ENCODE measurements at regions of chr19 and their contacts with region 1.

Region 1: DNA sequence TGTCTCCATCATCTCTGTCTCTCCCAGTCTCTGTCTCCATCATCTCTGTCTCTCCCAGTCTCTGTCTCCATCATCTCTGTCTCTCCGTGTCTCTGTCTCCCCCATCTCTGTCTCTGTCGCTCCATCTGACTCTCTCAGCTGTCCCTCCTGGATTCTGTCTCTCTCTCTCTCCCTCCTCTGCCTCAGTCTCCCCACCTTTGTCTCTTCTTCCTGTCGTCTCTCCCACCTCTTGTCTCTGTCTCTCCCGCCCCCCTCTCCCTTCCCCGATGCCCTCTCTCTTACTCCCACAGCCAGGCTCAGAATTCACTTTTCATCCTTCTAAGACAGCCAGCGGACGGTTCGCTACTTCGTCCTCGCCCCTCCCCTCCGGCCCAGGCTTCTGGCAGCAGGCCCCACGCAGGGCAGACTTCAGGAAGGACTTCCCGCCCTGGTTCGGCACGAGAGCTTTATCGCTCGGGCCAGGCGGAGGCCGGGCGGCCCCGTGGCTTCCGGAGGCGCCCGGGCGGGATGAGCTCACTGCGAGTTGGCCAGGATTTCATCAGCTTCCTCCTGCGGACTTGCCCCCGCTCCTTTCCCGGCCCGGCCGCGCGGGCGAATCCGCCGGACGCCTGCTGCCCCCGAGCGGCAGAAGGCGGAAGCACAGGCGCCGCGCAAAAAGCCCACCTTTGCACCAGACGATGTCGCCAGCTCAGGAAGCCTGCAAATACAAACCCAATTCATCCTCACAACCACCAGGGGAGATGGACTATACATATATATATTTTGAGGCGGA is 12.4 kb upstream of the CCDC9 start:
- DNase-seq: peak; percentile 89 to 94 (median 93)
- H3K4me3 ChIP-seq: peak overlapping the region; percentile 20
- H3K27ac ChIP-seq: no peak overlapping the region
- H3K4me1 ChIP-seq: peaks cover 6% of the 10 kb centered on the region
- H3K27me3 ChIP-seq: no peaks in the 10 kb centered on the region
- CTCF ChIP-seq: peak; percentile 95 to 99 (median 99)
- EP300 ChIP-seq: no peak
- POLR2A ChIP-seq: no peak

Region 2: GRCh38 chr19:46898731-46899130 is 345.2 kb before region 1 on chr19:
- intact Hi-C with region 1: no loop called
- DNase-seq: peak in 3 of 5 donors; percentile 17 to 25 (median 25)
- H3K4me3 ChIP-seq: no peak overlapping the region
- H3K27ac ChIP-seq: no peak overlapping the region
- H3K4me1 ChIP-seq: peaks cover 15% of the 10 kb centered on the region
- H3K27me3 ChIP-seq: no peaks in the 10 kb centered on the region
- CTCF ChIP-seq: no peak
- EP300 ChIP-seq: no peak
- POLR2A ChIP-seq: no peak

Region 3: DNA sequence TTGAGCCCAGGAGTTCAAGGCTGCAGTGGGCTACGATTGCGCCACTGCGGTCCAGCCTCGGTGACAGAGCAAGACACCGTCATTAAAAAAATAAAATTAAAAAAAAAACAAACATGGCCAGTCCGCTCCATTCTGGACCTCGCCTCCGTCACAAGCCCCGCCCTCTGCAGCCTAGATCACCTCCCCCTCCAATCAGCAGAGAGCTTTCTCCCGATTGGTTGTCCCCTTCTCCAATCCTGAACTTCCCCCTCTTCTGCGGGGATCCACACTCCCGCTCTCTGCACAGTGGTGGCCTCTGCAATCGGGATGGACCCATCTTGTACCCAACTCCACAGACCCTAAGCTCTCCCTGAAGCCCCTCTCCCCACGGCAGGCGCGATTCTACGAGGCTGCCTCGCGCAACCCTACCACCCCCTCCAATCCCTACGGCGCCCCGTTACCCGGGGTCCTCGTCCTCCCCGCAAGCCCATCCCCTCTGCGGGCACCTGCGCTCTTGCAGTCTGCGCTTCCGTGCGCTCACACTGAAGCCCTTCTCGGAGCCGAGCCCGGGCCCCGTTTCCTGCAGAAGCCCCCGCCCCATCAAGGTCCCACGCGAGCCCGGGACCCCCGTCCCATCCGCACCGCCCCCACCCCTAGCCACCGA is 196.1 kb before region 1 on chr19:
- intact Hi-C with region 1: no loop called
- DNase-seq: peak; percentile 78 to 87 (median 84)
- H3K4me3 ChIP-seq: peak overlapping the region; percentile 79
- H3K27ac ChIP-seq: peak overlapping the region in 1 of 2 donors; percentile 45
- H3K4me1 ChIP-seq: peaks cover 4% of the 10 kb centered on the region
- H3K27me3 ChIP-seq: no peaks in the 10 kb centered on the region
- CTCF ChIP-seq: no peak
- EP300 ChIP-seq: no peak
- POLR2A ChIP-seq: no peak

Region 4: GRCh38 chr19:47075179-47075810 is 168.7 kb before region 1 on chr19:
- intact Hi-C with region 1: loop called in 1 of 4 experiments (anchors 5 kb)
- DNase-seq: no peak
- H3K4me3 ChIP-seq: no peak overlapping the region
- H3K27ac ChIP-seq: no peak overlapping the region
- H3K4me1 ChIP-seq: no peaks in the 10 kb centered on the region
- H3K27me3 ChIP-seq: no peaks in the 10 kb centered on the region
- CTCF ChIP-seq: no peak
- EP300 ChIP-seq: no peak
- POLR2A ChIP-seq: no peak

Region 5: DNA sequence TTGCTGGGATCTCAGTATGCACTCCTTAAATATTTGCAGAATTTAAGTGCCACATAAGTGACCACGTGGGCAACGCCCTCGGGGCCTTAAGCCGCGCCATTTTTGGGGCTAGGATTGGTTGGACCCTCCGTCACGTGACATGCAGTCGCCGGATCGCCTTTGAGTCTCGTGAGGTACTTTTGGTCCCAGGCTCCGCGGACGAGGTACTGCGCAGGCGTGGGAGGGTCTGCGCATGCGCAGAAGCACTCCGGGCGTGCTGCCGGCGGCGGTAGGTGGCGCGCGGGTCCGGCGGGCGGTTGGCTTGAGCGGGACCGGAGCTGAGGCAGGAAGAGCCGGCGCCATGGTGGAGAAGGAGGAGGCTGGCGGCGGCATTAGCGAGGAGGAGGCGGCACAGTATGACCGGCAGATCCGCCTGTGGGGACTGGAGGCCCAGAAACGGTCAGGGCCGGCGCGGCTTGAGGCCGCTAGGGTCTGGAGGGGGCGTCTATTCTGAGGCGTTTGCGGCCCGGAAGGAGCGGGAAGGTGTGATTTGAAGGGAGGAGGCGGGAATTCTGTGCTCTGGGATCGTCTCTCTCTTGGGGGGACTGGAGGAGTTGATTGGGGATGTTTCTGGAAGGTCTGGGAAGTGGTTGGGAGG is 113.3 kb before region 1 on chr19 and contains the start of gene SAE1:
- intact Hi-C with region 1: no loop called
- DNase-seq: peak; percentile 93 to 97 (median 93)
- H3K4me3 ChIP-seq: peak within 1 kb of the TSS; percentile 83
- H3K27ac ChIP-seq: peak within 1 kb of the TSS; percentile 73 to 88
- H3K4me1 ChIP-seq: peaks cover 9% of the 10 kb centered on the region
- H3K27me3 ChIP-seq: no peaks in the 10 kb centered on the region
- CTCF ChIP-seq: peak; percentile 24 to 71 (median 71)
- EP300 ChIP-seq: no peak
- POLR2A ChIP-seq: peak; percentile 47
- total RNA-seq, gene SAE1: 25.5 to 64.8 (median 55.6) TPM

Region 6: DNA sequence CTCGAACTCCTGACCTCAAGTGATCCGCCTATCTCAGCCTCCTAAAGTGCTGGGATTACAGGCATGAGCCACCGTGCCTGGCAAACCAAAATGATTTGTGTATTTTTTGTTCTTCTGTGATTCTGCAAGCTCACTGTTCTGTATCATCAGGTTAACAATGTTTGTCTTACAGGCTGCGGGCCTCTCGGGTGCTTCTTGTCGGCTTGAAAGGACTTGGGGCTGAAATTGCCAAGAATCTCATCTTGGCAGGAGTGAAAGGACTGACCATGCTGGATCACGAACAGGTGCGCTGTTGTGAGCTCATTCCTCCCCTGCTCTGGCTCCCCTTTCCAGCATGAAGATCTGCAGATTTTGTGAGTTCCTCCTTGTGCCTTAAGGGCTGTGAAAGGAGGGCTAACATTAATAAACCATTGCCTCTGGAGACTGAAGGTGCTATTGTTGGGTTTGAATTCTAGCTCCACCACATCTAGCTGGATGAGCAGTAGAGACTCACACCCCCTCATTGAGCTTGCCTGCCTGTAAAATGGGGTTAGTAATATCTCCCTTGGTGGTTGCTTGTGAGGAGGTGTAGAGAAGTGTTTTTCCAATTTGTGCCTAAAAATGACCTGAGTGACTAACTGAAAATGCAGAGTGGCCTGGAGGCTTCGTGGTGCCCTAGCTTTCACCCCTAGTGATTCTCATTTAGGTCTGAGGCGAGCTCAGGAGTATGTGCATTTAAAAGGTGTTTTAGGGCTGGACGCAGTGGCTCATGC is 100.5 kb before region 1 on chr19:
- intact Hi-C with region 1: loop called in 3 of 4 experiments (anchors 2 to 10 kb)
- DNase-seq: no peak
- H3K4me3 ChIP-seq: no peak overlapping the region
- H3K27ac ChIP-seq: no peak overlapping the region
- H3K4me1 ChIP-seq: no peaks in the 10 kb centered on the region
- H3K27me3 ChIP-seq: no peaks in the 10 kb centered on the region
- CTCF ChIP-seq: no peak
- EP300 ChIP-seq: no peak
- POLR2A ChIP-seq: no peak

Region 7: GRCh38 chr19:47152224-47153017 is 91.5 kb before region 1 on chr19:
- intact Hi-C with region 1: loop called (anchors 2 to 10 kb)
- DNase-seq: no peak
- H3K4me3 ChIP-seq: no peak overlapping the region
- H3K27ac ChIP-seq: no peak overlapping the region
- H3K4me1 ChIP-seq: peaks cover 2% of the 10 kb centered on the region
- H3K27me3 ChIP-seq: no peaks in the 10 kb centered on the region
- CTCF ChIP-seq: no peak
- EP300 ChIP-seq: no peak
- POLR2A ChIP-seq: no peak

Region 8: DNA sequence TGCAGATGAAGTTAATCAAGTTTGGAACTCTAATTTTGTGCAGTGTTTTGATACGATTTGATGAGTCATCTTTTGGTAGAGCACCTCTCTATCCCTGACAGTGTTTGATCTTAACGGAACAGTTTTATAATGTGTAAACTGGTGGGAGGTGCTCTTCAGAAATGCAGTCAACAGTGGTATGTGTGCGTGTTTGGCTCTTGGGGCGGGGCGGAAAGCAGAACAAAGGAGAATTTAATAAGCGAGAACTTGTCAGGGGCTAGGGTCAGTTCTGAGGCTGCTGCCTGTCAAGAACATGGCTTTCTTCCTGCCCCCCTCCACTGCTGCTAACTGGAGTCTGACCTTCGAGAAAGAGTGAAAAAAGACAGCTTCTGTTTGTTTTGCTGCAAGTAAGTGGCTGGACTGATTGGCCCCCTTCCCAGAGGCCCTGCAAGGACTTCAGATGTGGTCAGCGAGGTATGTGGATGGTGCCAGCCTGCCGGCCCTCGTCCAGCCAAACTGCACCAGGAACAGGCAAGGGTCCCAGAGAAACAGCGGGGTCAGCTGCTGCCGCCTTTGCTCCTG is 53.7 kb before region 1 on chr19:
- intact Hi-C with region 1: loop called in 1 of 4 experiments (anchors 10 kb)
- DNase-seq: peak; percentile 49 to 74 (median 63)
- H3K4me3 ChIP-seq: no peak overlapping the region
- H3K27ac ChIP-seq: peak overlapping the region in 1 of 2 donors; percentile 46
- H3K4me1 ChIP-seq: peaks cover 8% of the 10 kb centered on the region
- H3K27me3 ChIP-seq: no peaks in the 10 kb centered on the region
- CTCF ChIP-seq: no peak
- EP300 ChIP-seq: no peak
- POLR2A ChIP-seq: no peak

Region 9: GRCh38 chr19:47210689-47211316 is 33.2 kb before region 1 on chr19:
- intact Hi-C with region 1: loop called in 2 of 4 experiments (anchors 5 kb)
- DNase-seq: peak; percentile 69 to 89 (median 73)
- H3K4me3 ChIP-seq: no peak overlapping the region
- H3K27ac ChIP-seq: no peak overlapping the region
- H3K4me1 ChIP-seq: peaks cover 1% of the 10 kb centered on the region
- H3K27me3 ChIP-seq: no peaks in the 10 kb centered on the region
- CTCF ChIP-seq: peak; percentile 41 to 85 (median 84)
- EP300 ChIP-seq: no peak
- POLR2A ChIP-seq: no peak

Measured in ovary (tissue), 10 donors.